Panc1 (cell line): ENCODE measurements at regions of chr9 and their contacts with region 1.

Region 1: DNA sequence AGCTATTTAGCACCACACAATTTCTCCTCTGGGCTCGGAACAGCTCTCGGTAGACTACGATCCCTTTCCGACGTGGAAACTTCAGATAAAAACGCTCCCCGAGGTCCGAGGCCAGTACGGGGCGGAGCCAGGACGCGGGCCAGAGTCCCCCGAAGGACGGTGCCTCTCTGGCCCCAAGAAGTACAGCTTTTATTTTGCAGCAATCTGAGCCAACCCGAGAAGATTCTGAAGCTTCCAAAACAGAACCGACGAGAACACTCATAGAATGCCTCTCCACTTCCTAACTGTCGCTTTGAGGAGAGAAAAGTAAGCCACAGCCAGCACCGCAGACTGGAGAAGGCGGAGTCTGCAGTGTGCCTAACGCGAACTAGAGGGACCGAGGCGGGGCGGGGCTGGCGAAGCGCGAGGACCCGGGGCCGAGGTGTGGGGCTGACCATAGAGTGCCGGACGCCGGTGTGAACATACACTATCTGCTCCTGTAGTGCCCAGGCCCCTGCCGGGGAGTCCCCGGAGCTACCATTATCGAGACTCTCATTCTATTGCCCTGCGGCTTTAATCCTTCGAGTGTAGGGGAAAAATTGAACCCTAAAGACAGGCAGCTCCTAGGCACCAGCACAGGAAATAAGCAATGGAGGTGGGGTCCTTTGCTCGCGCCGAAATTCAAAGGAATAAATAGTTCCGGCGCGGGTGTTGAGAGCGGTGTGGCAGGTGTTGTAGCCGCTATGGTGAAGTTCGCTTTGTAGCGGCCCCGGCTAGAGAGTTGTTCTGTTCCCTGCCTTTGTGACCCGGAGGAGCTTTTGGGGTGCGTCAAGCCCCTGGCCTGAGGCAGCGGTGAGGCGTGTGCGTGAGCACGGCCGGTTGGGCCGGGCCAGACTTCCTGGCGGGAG is at the start of gene SMC2:
- DNase-seq: peak; percentile 74
- ATAC-seq: peak; percentile 96
- H3K4me3 ChIP-seq: peak within 1 kb of the TSS; percentile 78 to 90
- H3K27ac ChIP-seq: peak within 1 kb of the TSS; percentile 95
- H3K4me1 ChIP-seq: peaks cover 10% of the 10 kb centered on the region
- H3K27me3 ChIP-seq: no peaks in the 10 kb centered on the region
- CTCF ChIP-seq: no peak
- total RNA-seq, gene SMC2: 25.3 TPM

Region 2: GRCh38 chr9:104028827-104029226 is 65.1 kb before region 1 on chr9:
- CTCF ChIA-PET with region 1: no interaction called
- POLR2A ChIA-PET with region 1: interaction called, 14 read pairs
- in situ Hi-C with region 1: no loop called
- intact Hi-C with region 1: no loop called
- DNase-seq: no peak
- ATAC-seq: no peak
- H3K4me3 ChIP-seq: no peak overlapping the region
- H3K27ac ChIP-seq: no peak overlapping the region
- H3K4me1 ChIP-seq: no peaks in the 10 kb centered on the region
- H3K27me3 ChIP-seq: no peaks in the 10 kb centered on the region
- CTCF ChIP-seq: no peak